MCF 10A (cell line): ENCODE measurements at regions of chr5 and their contacts with region 1.

Region 1: GRCh38 chr5:96093890-96094381 is 132.3 kb upstream of the ELL2 start:
- DNase-seq: peak; percentile 90
- H3K4me3 Mint-ChIP-seq: no peak overlapping the region
- H3K27ac Mint-ChIP-seq: peak overlapping the region; percentile 1
- H3K4me1 Mint-ChIP-seq: peaks cover 28% of the 10 kb centered on the region
- H3K27me3 Mint-ChIP-seq: no peaks in the 10 kb centered on the region
- CTCF ChIP-seq: no peak

Region 2: DNA sequence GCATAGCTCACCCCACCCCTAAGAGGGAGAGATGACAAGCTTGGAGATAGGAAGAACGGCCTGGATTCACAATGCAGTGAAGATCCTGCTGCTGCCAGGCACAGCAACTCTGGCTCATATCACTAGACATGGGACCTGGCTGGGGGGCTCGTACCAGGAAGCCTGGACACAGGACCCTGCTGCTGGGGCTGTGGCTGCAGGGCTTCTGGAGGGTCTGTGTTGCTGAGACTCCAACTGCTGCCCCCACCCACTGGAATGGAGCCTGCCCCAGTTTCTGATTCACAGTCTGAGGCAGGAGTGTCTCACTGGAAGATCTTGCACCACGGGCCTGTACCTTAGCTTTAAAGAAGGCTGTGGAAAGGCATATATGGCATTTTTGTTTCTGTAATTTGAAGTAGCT is 240.4 kb before region 1 on chr5:
- CTCF ChIA-PET with region 1: no interaction called
- POLR2A ChIA-PET with region 1: no interaction called
- intact Hi-C with region 1: no loop called
- DNase-seq: no peak
- H3K4me3 Mint-ChIP-seq: no peak overlapping the region
- H3K27ac Mint-ChIP-seq: no peak overlapping the region
- H3K4me1 Mint-ChIP-seq: peaks cover 11% of the 10 kb centered on the region
- H3K27me3 Mint-ChIP-seq: no peaks in the 10 kb centered on the region
- CTCF ChIP-seq: no peak

Region 3: GRCh38 chr5:95984287-95984938 is 109.5 kb before region 1 on chr5:
- CTCF ChIA-PET with region 1: no interaction called
- POLR2A ChIA-PET with region 1: no interaction called
- intact Hi-C with region 1: no loop called
- DNase-seq: no peak
- H3K4me3 Mint-ChIP-seq: no peak overlapping the region
- H3K27ac Mint-ChIP-seq: no peak overlapping the region
- H3K4me1 Mint-ChIP-seq: no peaks in the 10 kb centered on the region
- H3K27me3 Mint-ChIP-seq: no peaks in the 10 kb centered on the region
- CTCF ChIP-seq: no peak

Region 4: GRCh38 chr5:96151891-96152290 is 58.0 kb after region 1 on chr5:
- CTCF ChIA-PET with region 1: no interaction called
- POLR2A ChIA-PET with region 1: interaction called, 21 read pairs
- intact Hi-C with region 1: no loop called
- DNase-seq: no peak
- H3K4me3 Mint-ChIP-seq: no peak overlapping the region
- H3K27ac Mint-ChIP-seq: no peak overlapping the region
- H3K4me1 Mint-ChIP-seq: peaks cover 28% of the 10 kb centered on the region
- H3K27me3 Mint-ChIP-seq: no peaks in the 10 kb centered on the region
- CTCF ChIP-seq: no peak